Stomach (tissue), 19 donors: ENCODE measurements at regions of chr2 and their contacts with region 1.

Region 1: DNA sequence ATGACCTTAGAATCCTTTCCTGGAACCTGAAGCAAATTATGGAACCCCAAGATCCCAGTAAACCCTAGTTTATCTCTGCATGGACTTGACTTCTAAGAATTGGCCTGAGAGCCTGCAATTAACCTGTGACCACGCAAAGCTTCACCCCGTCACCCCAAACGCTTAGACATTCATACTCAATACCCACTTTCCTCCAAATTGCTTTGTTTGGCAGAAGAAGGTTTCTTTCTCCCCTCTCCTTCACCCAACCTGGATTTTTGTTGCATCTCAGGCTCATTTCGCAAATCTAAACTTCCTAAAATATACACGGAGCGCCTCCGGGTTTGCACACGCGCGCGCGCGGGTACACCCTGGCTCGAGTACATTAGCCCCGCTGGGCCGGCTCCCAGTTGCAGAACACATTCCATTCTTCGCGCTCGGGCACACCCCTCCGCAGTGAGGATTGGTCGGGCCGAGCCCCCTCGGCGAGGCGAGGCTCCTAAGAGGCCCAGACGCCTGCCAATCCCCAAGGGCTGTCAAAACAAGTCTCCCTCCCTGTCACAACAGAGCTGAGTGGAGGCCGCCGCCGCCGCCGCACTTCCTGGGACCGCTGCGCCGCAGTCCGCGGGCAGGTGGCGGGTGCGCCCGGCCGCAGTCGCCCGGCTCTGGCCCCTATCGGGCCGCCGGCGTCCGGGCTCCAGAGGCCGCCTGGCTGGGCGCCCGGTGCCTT is at the start of gene PLCL1:
- DNase-seq: peak; percentile 92 to 96
- H3K4me3 ChIP-seq: peak within 1 kb of the TSS; percentile 76 to 93 (median 83)
- H3K27ac ChIP-seq: peak within 1 kb of the TSS; percentile 20 to 83 (median 74)
- H3K4me1 ChIP-seq: peaks cover 8 to 42% (median 31%) of the 10 kb centered on the region in 4 donors
- H3K27me3 ChIP-seq: peaks cover 0 to 8% (median 4%) of the 10 kb centered on the region in 3 donors
- CTCF ChIP-seq: peak in 1 of 7 experiments; percentile 4
- EP300 ChIP-seq: no peak
- POLR2A ChIP-seq: no peak
- total RNA-seq, gene PLCL1: 2.2 to 28.7 (median 4.1) TPM

Region 2: GRCh38 chr2:198127627-198128026 is 323.4 kb after region 1 on chr2:
- intact Hi-C with region 1: loop called (anchors 5 kb)
- DNase-seq: peak in 1 of 2 donors; percentile 83
- H3K4me3 ChIP-seq: no peak overlapping the region
- H3K27ac ChIP-seq: no peak overlapping the region
- H3K4me1 ChIP-seq: peaks cover 0 to 6% (median 3%) of the 10 kb centered on the region in 4 donors
- H3K27me3 ChIP-seq: no peaks in the 10 kb centered on the region
- CTCF ChIP-seq: peak in 5 of 7 experiments; percentile 14 to 55 (median 52)
- EP300 ChIP-seq: no peak
- POLR2A ChIP-seq: no peak

Region 3: DNA sequence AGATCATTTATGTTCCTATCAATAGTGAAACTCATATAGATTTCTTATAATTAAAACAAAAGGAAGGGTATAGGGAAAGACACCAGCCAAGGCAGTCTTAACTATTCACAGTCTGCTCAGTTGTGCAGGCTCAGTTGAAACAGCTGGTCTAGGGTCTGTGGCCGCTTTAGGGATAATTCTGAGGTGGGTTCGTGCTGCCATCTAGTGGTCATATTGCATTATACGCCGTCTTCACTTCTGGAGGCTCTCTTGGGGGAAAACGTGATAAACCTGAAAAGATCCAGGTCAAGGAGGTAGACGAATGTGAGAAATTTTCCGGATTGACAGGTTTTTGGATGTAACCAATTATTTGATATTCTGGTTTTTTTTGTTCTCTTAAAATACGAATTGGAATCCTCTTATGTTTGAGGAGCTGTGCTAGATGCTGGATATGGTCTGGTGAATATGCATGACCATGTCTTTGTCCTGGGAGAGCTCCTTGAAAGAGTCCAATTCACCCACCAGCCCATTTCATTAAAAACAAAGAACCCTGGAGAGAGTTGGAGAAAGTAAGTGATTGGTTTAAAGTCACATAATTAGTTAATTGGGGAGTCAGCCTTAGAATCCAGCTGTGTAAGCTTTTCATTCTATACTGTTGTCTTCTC is 492.6 kb after region 1 on chr2:
- intact Hi-C with region 1: loop called (anchors 10 kb)
- DNase-seq: peak; percentile 34 to 87
- H3K4me3 ChIP-seq: no peak overlapping the region
- H3K27ac ChIP-seq: no peak overlapping the region
- H3K4me1 ChIP-seq: peaks cover 0 to 8% (median 3%) of the 10 kb centered on the region in 4 donors
- H3K27me3 ChIP-seq: no peaks in the 10 kb centered on the region
- CTCF ChIP-seq: peak in 5 of 7 experiments; percentile 19 to 76 (median 71)
- EP300 ChIP-seq: no peak
- POLR2A ChIP-seq: no peak